AG04449 (cell line): ENCODE measurements at regions of chr5 and their contacts with region 1.

Region 1: GRCh38 chr5:59923465-59923864 is 29.9 kb upstream of the PDE4D start:
- DNase-seq: no peak
- H3K4me3 ChIP-seq: no peak overlapping the region
- CTCF ChIP-seq: peak; percentile 21

Region 2: GRCh38 chr5:59819806-59820205 is 103.7 kb before region 1 on chr5:
- CTCF ChIA-PET with region 1: interaction called, 49 read pairs
- POLR2A ChIA-PET with region 1: no interaction called
- DNase-seq: no peak
- H3K4me3 ChIP-seq: no peak overlapping the region
- CTCF ChIP-seq: no peak

Region 3: GRCh38 chr5:59893429-59894227 is 29.8 kb before region 1 on chr5 and contains the start of gene PDE4D:
- CTCF ChIA-PET with region 1: no interaction called
- POLR2A ChIA-PET with region 1: no interaction called
- DNase-seq: no peak
- H3K4me3 ChIP-seq: peak within 1 kb of the TSS; percentile 45
- CTCF ChIP-seq: no peak